MCF 10A (cell line): ENCODE measurements at regions of chr5 and their contacts with region 1.

Region 1: GRCh38 chr5:7856855-7857254 is 5.9 kb upstream of the CFAP90 start:
- DNase-seq: peak; percentile 48
- H3K4me3 Mint-ChIP-seq: no peak overlapping the region
- H3K27ac Mint-ChIP-seq: no peak overlapping the region
- H3K4me1 Mint-ChIP-seq: no peaks in the 10 kb centered on the region
- H3K27me3 Mint-ChIP-seq: no peaks in the 10 kb centered on the region
- CTCF ChIP-seq: peak; percentile 44

Region 2: DNA sequence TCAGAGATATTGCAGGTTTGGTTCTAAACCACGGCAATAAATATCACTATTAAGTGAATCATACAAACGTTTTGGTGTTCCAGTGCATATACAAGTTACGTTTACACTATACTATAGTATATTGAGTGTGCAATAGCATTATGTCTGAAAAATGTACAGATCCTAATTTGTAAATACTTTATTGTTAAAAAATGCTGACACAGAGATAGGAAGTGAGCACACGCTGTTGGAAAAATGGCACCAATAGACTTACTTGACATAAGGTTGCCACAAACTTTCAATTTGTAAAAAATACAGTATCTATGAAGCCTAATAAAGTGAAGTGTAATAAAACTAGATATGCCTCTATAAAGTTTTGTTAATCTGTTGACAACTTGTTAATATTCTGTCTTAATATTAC is 21.9 kb before region 1 on chr5:
- CTCF ChIA-PET with region 1: no interaction called
- POLR2A ChIA-PET with region 1: no interaction called
- intact Hi-C with region 1: no loop called
- DNase-seq: no peak
- H3K4me3 Mint-ChIP-seq: no peak overlapping the region
- H3K27ac Mint-ChIP-seq: no peak overlapping the region
- H3K4me1 Mint-ChIP-seq: no peaks in the 10 kb centered on the region
- H3K27me3 Mint-ChIP-seq: no peaks in the 10 kb centered on the region
- CTCF ChIP-seq: no peak

Region 3: DNA sequence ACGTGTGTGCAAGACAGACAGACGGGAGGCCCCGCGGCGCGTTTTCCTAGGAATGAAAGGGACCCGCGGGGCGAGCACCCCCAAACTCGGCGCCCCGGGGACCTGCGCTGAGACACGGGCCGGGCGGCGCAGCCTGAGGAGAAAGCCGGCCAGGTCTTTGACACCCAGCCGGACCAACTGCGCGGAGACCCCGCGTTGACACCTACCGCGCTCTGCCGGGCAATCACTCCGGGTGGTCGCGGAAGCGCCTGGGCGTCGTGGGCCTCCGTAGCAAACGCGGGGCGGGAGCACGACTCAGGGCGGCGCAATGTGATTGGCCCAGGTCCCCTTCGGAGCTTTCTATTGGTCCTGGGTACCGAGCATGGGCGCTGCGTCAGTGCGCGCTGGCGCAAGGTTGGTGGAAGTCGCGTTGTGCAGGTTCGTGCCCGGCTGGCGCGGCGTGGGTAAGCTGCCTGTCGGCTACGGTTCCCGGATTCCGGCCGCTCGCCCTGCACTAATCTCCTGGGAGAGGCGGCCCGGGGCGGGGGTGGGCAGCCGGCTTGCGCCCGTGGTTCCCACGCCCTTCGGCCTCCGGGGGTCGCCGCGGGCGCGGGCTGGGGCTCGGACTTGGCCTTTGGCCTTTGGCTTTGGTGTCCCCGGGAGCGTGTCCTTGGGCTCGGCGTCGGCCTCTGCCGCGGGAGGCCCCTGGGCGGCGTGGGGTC is 12.1 kb after region 1 on chr5 and contains the starts of genes FASTKD3 and MTRR:
- CTCF ChIA-PET with region 1: interaction called, 9 read pairs
- POLR2A ChIA-PET with region 1: interaction called, 10 read pairs
- intact Hi-C with region 1: no loop called
- DNase-seq: peak; percentile 92
- H3K4me3 Mint-ChIP-seq: peak within 1 kb of the TSS; percentile 84
- H3K27ac Mint-ChIP-seq: peak within 1 kb of the TSS; percentile 83
- H3K4me1 Mint-ChIP-seq: peaks cover 23% of the 10 kb centered on the region
- H3K27me3 Mint-ChIP-seq: no peaks in the 10 kb centered on the region
- CTCF ChIP-seq: no peak
- total RNA-seq, gene FASTKD3: 7.8 and 7.9 TPM in 2 replicates
- total RNA-seq, gene MTRR: 46.6 and 88.6 TPM in 2 replicates

Region 4: DNA sequence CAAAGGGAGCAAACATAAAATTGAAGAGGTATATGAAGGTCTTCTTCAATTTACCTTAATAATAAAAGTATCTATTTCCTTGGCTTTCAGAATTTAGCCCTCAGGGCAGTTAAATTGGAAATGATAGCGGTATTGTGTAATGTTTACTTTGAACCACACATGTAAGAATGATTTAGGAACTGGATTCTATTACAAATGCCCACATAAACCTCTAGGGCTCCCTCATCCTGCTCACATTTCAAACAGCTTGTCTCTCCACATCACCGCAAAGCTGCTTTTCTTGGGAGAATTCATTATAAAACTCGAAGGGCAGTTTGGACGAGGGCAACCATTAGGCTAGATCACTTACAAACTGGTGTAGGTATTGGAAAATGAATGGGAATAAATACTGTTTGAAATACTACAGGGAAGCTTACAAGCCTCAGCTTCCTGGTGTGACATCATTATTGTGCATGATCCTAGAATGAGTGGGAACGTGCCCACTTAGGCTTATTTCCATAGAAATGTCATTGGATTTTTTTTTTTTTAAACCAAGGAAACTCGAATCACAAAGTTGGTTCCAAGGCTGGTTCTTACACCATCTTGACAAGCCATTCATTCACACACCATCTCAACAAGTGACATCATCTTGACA is 59.4 kb after region 1 on chr5:
- CTCF ChIA-PET with region 1: no interaction called
- POLR2A ChIA-PET with region 1: no interaction called
- intact Hi-C with region 1: no loop called
- DNase-seq: peak; percentile 18
- H3K4me3 Mint-ChIP-seq: no peak overlapping the region
- H3K27ac Mint-ChIP-seq: no peak overlapping the region
- H3K4me1 Mint-ChIP-seq: peaks cover 7% of the 10 kb centered on the region
- H3K27me3 Mint-ChIP-seq: no peaks in the 10 kb centered on the region
- CTCF ChIP-seq: no peak